ENCODE measurements at regions of chr2 and their contacts with region 1.

Region 1: GRCh38 chr2:62456721-62457539 is 49.1 kb downstream of the TMEM17 start:
- DNase-seq: peak; percentile 75
- H3K27ac ChIP-seq: peak overlapping the region; percentile 66
- CTCF ChIP-seq: peak; percentile 90

Region 2: DNA sequence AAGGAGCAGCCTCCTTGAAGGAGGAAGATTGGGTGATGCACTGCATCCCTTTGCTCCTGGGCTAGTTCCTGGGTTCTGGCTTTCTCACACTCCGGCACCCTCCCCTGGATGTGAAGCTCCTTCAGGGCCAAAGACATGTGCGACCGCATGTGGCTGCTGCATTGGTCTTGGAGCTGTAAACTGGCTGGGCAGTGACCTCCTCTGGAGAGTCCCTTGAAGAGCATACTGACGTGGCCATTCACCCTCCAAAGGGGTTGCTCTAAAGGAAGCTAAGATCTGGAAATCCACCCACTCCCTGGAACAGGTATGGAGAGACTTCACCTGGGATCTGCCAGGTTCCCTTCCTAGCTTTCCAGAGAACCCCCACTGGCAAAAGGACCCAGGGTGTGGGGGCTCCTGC is 13.0 kb before region 1 on chr2:
- CTCF ChIA-PET with region 1: interaction called, 12 read pairs
- POLR2A ChIA-PET with region 1: no interaction called
- DNase-seq: no peak
- H3K27ac ChIP-seq: no peak overlapping the region
- CTCF ChIP-seq: no peak

Region 3: DNA sequence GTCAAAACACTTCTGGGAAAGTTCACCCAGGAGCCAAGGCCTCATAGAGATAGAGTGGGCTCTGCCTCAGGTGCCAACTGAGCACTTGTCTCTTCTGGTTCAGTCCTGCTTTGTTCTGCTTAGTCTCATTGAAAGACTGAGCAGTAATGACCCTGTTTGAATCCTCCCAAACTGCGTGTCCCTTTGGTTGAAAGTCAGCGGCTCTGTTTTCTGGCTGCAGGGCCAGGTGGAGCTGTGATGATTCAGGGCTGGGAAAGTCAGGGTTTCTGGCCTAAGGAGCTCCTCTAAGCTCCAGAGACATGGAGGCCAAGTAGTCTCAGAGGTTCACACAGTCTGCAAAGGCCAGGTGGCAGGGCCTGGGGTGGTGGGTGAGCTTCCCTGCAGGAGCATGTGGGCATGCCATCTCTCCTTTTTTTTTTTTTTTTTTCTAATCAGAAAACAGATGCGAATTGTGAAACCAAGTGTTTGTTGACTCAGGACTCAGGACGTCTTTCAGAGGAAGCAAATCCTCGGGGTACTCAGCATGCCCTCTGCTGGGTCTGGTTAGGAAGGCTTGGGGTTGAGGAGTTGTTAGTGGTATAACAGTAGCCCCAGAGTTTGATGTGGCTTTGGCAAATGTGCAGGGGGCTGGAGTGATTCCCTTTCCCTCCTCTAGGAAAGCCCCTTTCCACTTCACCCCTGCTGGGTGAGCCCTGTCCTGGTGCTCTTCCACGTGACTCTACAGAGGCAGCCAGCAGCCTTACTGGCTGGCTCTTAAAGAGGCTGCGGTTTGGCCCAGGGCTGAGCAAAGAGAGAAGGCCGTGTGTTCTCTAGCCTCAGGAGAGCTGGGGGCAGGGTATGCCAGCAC is 10.8 kb after region 1 on chr2:
- CTCF ChIA-PET with region 1: interaction called, 10 read pairs
- POLR2A ChIA-PET with region 1: no interaction called
- DNase-seq: no peak
- H3K27ac ChIP-seq: no peak overlapping the region
- CTCF ChIP-seq: no peak

Region 4: DNA sequence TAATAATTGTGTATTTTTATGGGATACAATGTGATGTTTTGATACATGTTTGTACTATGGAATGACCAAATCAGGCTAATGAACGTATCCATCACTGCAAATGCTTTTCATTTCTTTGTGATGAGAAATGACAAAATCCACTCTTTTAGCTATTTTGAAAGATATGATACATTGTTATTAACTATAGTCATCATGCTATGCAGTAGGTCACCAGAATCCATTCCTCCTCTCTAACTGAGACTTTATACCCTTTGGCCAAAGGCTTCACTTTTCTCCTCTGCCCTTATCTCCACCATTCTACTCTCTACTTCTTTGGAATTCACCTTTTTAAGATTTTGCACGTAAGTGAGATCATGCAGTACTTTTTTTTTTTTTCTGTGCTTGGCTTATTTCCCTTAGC is 93.5 kb after region 1 on chr2:
- CTCF ChIA-PET with region 1: no interaction called
- POLR2A ChIA-PET with region 1: no interaction called
- DNase-seq: no peak
- H3K27ac ChIP-seq: no peak overlapping the region
- CTCF ChIP-seq: no peak

Region 5: DNA sequence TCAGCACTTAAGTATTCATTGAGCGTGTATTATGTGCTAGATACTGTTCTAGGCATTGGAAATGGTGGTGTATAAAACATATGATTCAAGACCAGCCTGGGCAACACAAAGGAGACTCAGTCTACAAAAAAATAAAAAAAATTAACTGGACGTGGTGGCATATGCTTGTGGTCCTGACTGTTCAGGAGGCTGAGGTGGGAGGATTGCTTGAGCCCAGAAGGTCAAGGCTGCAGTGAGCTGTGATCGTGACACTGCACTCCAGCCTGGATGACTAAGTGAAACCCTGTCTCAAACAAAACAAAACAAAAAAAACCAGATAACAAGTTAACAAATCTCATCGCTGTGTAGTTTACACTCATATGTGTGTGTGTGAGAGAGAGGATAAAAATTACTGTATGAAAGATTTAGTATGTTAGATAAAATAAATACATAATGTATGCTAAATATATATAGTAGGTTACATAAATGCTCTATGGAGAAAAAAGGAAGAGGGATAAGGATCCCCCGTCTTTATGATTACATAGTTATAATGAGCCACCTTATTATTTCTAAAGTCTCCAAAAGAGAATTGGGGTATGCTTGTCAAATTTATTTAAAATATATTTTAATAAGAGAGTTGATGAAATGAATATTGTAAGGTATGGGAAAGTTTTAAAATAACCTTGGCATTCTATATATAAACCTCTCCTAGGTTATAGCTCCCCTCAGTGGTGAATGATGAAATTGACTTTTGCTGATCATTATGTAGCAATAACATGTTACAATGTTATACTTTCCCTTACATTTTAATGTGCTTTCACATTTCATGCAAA is 317.8 kb after region 1 on chr2:
- CTCF ChIA-PET with region 1: interaction called, 38 read pairs
- POLR2A ChIA-PET with region 1: no interaction called
- DNase-seq: peak; percentile 38
- H3K27ac ChIP-seq: peak overlapping the region; percentile 59
- CTCF ChIP-seq: peak; percentile 88

Region 6: DNA sequence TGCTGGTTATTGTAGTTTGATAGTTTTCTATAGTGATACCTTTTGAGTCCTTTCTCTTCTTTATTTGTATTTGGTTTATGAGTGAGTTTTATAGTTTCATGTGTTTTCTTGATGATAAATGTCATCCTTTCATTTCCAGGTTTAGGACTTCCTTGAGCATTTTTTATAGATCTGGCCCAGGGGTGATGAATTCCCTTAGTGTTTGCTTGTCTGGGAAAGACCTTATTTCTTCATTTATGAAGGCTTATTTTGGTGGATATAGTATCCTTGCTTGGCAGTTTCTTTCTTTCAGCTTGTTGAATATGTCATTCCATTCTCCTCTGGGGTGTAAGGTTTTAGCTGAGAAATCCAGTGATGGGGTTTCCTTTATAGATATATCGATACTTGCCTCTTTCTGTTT is 647.6 kb after region 1 on chr2:
- CTCF ChIA-PET with region 1: no interaction called
- POLR2A ChIA-PET with region 1: no interaction called
- DNase-seq: no peak
- H3K27ac ChIP-seq: no peak overlapping the region
- CTCF ChIP-seq: no peak